Vagina (tissue), 2 donors: ENCODE measurements at regions of chr15 and their contacts with region 1.

Region 1: GRCh38 chr15:93730724-93731123 is 500.6 kb upstream of the MCTP2 start:
- DNase-seq: no peak
- H3K4me3 ChIP-seq: no peak overlapping the region
- H3K27ac ChIP-seq: no peak overlapping the region
- H3K4me1 ChIP-seq: no peaks in the 10 kb centered on the region
- H3K27me3 ChIP-seq: no peaks in the 10 kb centered on the region
- CTCF ChIP-seq: no peak
- POLR2A ChIP-seq: no peak

Region 2: DNA sequence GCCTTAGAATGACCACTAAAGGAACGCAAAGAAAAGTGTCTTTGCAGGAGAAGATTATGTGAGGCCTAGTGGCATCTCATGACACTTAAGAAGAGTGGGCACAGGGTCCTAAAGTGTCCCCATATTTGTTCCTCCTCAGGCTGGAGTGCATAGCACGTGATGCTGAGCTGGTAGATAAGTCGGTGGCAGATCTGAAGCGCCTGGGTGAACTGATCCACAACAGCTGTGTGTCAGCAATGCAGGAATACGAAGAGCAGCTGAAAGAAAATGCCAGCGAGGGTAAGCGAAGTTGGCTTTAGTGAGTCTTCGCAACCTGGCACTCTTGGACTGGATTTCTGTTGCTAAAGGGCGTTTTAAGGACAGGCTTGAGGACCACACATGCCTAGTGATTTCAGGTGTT is 738.0 kb before region 1 on chr15:
- intact Hi-C with region 1: loop called (anchors 5 kb)
- DNase-seq: no peak
- H3K4me3 ChIP-seq: no peak overlapping the region
- H3K27ac ChIP-seq: no peak overlapping the region
- H3K4me1 ChIP-seq: no peaks in the 10 kb centered on the region
- H3K27me3 ChIP-seq: no peaks in the 10 kb centered on the region
- CTCF ChIP-seq: no peak
- POLR2A ChIP-seq: no peak

Region 3: DNA sequence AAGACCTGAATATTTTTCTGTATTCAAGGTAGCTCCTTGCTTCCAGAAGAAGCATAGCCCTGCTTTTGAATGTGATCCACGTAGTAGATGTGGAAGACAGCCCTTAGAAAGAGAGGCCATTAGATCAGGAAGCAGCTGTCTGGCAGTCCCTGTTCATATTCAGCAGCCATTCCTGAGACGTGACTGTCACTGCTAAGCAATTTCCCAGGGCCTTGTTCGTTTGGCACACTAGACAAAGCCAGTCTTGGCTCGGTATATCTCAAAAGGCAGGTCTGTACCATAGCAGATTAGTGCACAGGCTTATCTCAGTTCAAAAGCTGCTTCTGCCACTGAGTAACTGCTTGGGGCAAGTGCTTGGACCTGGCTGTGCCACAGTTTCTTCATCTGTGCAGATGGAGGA is 212.9 kb after region 1 on chr15:
- intact Hi-C with region 1: no loop called
- DNase-seq: no peak
- H3K4me3 ChIP-seq: no peak overlapping the region
- H3K27ac ChIP-seq: no peak overlapping the region
- H3K4me1 ChIP-seq: no peaks in the 10 kb centered on the region
- H3K27me3 ChIP-seq: no peaks in the 10 kb centered on the region
- CTCF ChIP-seq: no peak
- POLR2A ChIP-seq: no peak